ENCODE measurements at regions of chr2 and their contacts with region 1.

Region 1: DNA sequence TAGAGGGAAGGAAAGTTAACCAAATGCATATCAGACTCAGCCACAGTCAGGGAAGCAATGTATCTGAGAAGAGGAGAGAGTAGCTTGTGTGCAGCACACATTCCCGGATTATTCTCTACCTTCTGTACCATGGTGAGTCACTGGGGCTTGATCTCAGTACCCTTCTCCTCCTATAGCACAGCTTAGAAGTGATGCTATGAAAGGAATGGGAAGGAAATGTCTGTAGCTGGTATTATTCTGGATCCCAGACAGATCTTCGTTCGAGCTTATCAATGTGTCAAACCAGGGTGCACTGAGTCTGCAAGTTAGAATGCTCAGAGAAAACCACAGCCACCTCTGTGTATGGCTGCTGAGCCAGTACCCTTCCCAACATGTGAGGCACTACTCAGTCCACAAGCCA is 88.0 kb upstream of the NFU1 start:
- DNase-seq: no peak
- H3K4me3 ChIP-seq: no peak overlapping the region
- CTCF ChIP-seq: no peak

Region 2: GRCh38 chr2:68961380-68961779 is 563.9 kb before region 1 on chr2:
- in situ Hi-C with region 1: no loop called
- DNase-seq: no peak
- H3K4me3 ChIP-seq: no peak overlapping the region
- CTCF ChIP-seq: no peak

Region 3: DNA sequence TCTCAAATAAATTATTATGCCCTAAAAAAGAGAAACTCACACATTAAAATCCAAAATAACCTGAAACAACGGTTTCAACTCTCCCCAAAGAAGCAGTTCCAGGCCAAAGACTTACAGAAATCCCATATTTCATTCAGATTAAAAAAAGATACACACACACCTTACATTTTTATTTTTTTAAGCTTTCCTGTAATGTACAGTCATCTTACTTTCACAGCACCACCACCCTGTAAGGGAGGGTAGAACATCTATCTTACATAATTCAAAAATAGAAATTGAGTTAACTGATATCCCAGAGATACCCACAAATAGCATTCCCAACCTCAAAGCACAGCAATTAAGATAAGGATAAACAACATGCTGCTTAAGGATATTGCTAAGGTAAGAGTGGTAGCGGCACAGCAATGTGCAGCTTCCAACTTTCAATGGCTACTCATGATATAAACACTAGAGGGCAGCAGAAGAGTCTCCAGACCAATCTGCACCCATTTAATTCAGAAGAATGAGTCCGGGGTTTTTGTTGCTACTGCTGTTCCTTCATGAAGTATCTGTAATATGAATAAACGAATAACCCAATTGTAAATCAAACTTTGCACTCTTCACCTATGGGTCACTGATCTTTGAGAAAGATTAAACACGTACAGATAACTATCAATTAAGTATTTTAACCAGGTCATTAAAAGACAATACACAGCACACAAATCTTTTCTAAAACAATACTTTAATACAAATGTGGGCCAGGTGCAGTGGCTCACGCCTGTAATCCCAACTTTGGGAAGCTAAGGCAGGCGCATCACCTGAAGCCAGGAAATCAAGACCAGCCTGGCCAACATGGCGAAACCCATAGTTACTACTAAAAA is 149.5 kb before region 1 on chr2:
- in situ Hi-C with region 1: loop called (anchors 10 kb)
- DNase-seq: no peak
- H3K4me3 ChIP-seq: no peak overlapping the region
- CTCF ChIP-seq: peak; percentile 46

Region 4: DNA sequence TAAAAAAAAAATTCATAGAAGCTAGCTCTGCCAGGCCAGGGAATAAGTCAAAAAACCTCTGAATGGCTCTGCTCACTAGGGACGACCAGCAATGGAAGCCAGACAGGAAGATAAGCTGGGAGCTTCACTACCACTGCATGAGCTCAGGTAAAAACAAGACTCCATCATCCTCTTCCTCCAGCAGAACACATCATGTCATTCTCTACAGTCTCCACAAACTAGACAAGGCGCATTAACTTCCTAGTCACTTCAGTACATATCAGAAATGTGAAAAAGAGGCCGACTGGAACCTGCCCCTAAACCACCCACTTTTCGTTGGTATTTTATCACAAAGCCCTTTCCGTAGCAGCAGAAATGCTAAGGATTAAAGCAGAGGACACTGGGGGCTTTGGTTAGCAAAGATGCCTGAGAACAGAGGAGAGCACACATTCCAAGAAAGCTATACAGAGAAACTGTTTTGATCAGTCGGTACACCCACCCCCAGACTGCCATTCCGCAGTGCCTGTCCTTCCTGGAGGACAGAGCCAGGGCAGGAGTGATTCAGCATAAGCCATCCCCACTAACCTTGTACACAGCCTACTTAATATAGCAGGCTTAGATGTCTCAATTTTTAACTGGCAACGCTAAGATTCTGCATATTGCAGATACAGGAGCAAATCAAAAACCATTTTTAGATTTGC is 64.9 kb after region 1 on chr2:
- in situ Hi-C with region 1: no loop called
- DNase-seq: no peak
- H3K4me3 ChIP-seq: no peak overlapping the region
- CTCF ChIP-seq: no peak

Region 5: GRCh38 chr2:69601179-69601612 is 75.9 kb after region 1 on chr2:
- in situ Hi-C with region 1: no loop called
- DNase-seq: no peak
- H3K4me3 ChIP-seq: no peak overlapping the region
- CTCF ChIP-seq: no peak

Measured in astrocyte of the cerebellum (primary cell).